ENCODE measurements at regions of chr1 and their contacts with region 1.

Region 1: DNA sequence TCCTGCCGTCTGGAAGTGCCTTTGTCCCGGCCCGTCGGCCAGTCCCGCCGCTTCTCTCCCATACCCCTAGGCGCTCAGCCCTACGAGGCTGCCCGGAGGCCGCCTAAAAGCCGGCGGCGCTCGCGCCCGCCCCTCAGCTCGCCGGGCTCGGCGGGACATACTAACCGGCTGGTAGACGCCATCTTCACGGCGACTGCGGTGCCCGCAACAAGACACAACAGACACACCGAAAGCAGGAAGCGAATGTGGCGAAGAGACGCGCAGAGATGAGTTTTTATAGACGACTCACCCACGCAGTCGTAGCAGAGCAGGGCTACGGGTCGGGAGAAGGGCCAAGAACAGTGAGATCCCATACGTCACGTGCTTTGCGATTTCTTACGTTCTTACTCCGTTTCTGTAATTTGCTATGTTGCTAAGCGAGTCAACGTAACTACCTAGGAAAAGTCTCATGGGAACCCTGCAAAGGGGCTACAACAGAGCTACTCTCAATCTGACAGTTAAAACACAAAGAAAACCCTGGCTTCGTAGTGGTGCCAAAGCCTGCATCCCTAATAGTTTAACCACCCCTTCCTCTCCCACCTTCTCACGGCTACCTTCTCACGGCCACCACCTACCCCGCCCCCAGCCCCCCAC is at the start of gene GTF2B:
- DNase-seq: peak; percentile 97
- H3K4me3 ChIP-seq: peak within 1 kb of the TSS; percentile 81 to 100 (median 86)
- H3K27ac ChIP-seq: peak within 1 kb of the TSS; percentile 94 to 98 (median 96)
- H3K4me1 ChIP-seq: peaks cover 0 to 29% (median 21%) of the 10 kb centered on the region in 4 donors
- H3K27me3 ChIP-seq: no peaks in the 10 kb centered on the region
- CTCF ChIP-seq: no peak
- EP300 ChIP-seq: peak in 2 of 4 donors; percentile 64 to 83
- POLR2A ChIP-seq: peak; percentile 89 to 92
- total RNA-seq, gene GTF2B: 21.6 to 42.6 (median 31.3) TPM

Region 2: DNA sequence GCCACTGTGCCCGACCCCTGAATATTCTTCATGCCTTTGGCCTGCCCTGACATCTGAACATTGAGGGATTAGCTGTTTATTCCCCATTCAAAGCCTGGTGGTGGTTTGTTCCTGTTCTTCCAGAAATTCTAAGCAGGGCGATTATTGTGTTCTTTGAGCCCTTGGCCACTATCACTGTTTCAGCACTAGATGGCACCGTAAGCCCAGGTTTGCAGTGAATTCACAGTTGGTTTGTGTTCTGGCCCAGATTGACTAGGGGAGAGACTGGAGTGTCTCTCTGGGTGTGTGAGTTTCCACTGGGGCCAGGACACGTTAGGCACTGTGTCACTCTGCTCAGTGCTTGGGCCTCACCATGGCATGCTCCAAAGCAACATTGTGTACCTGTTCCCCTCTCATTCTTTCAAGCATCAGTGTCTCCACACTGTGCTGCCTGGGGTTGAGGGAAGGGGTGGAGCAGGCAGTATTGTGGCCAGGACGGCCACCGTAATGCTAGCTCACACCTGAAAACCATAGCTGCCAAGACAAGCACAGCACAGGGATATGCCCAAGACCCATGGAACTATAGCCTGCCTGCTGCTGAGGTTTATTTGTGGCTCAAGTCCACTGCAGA is 154.7 kb before region 1 on chr1:
- intact Hi-C with region 1: loop called (anchors 10 kb)
- DNase-seq: no peak
- H3K4me3 ChIP-seq: no peak overlapping the region
- H3K27ac ChIP-seq: no peak overlapping the region
- H3K4me1 ChIP-seq: peaks cover 0 to 16% (median 0%) of the 10 kb centered on the region in 4 donors
- H3K27me3 ChIP-seq: no peaks in the 10 kb centered on the region
- CTCF ChIP-seq: peak in 1 of 4 experiments; percentile 25
- EP300 ChIP-seq: no peak
- POLR2A ChIP-seq: no peak

Region 3: GRCh38 chr1:88946861-88947260 is 55.4 kb after region 1 on chr1:
- intact Hi-C with region 1: no loop called
- DNase-seq: no peak
- H3K4me3 ChIP-seq: no peak overlapping the region
- H3K27ac ChIP-seq: no peak overlapping the region
- H3K4me1 ChIP-seq: no peaks in the 10 kb centered on the region
- H3K27me3 ChIP-seq: no peaks in the 10 kb centered on the region
- CTCF ChIP-seq: no peak
- EP300 ChIP-seq: no peak
- POLR2A ChIP-seq: no peak

Region 4: GRCh38 chr1:89994805-89995597 is 1103.6 kb after region 1 on chr1 and contains the start of gene ZNF326:
- intact Hi-C with region 1: loop called (anchors 10 kb)
- DNase-seq: peak; percentile 97
- H3K4me3 ChIP-seq: peak within 1 kb of the TSS; percentile 63 to 78 (median 76)
- H3K27ac ChIP-seq: peak within 1 kb of the TSS; percentile 93 to 98 (median 95)
- H3K4me1 ChIP-seq: peaks cover 0 to 41% (median 29%) of the 10 kb centered on the region in 4 donors
- H3K27me3 ChIP-seq: no peaks in the 10 kb centered on the region
- CTCF ChIP-seq: no peak
- EP300 ChIP-seq: peak in 1 of 4 donors; percentile 6
- POLR2A ChIP-seq: peak; percentile 83 to 87
- total RNA-seq, gene ZNF326: 16.0 to 24.4 (median 18.1) TPM

Measured in sigmoid colon (tissue), 7 donors.